Ascending aorta (tissue), 2 donors: ENCODE measurements at regions of chr16 and their contacts with region 1.

Region 1: DNA sequence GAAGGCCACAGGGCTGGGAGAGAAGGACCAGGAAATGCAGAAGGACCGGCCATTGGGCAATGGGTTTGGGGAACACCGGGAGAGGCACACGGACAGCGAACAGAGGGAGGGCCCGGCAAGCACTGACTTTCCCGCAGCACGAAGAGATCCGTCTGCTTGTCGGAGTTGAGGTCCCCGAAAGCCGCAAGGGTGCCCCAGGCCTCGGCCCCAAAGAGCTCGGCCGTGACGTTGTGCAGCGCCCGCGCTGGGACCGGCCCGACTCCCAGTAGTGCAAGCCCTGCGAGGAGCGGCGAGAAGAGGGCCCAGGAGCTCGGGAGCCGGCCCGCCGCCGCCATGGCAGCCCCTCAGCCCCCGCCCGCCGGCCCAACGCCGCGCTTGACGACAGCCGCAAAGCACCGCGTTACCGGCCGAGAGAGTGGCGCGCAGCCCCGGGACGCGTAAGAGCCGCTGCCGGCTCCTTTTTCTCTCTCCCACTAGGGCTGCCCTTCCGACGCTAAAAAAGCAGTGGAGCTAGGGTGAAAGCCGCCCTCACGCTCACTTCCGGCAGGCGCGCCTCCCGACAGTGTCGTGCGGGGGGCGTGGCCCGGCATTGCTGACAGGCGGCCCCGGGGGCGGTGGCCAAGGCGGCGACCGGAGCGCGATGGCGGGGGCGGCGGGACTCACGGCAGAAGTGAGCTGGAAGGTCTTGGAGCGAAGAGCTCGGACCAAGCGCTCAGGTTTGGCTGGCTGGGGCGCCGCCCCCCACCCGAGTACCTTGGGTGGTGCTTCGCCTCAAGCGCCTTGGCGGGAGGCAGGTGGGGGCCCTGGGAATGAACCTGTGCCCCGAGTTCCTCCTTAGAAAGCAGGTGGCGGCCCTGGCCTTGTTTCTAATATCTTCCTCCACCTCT is at the starts of genes ITFG1 and PHKB:
- DNase-seq: peak; percentile 69 to 95
- H3K4me3 ChIP-seq: peak within 1 kb of the TSS; percentile 91 to 95
- H3K27ac ChIP-seq: peak within 1 kb of the TSS; percentile 99 to 100
- H3K4me1 ChIP-seq: peaks cover 8 to 17% of the 10 kb centered on the region in 2 donors
- H3K27me3 ChIP-seq: no peaks in the 10 kb centered on the region
- CTCF ChIP-seq: peak in 1 of 3 experiments; percentile 16
- total RNA-seq, gene ITFG1: 56.7 TPM
- total RNA-seq, gene PHKB: 14.6 TPM

Region 2: GRCh38 chr16:46973207-46973995 is 487.6 kb before region 1 on chr16 and contains the start of gene DNAJA2:
- intact Hi-C with region 1: loop called (anchors 2 kb)
- DNase-seq: peak; percentile 47 to 94
- H3K4me3 ChIP-seq: peak within 1 kb of the TSS; percentile 87
- H3K27ac ChIP-seq: peak within 1 kb of the TSS; percentile 93 to 96
- H3K4me1 ChIP-seq: peaks cover 10 to 15% of the 10 kb centered on the region in 2 donors
- H3K27me3 ChIP-seq: no peaks in the 10 kb centered on the region
- CTCF ChIP-seq: no peak
- total RNA-seq, gene DNAJA2: 15.8 TPM

Region 3: GRCh38 chr16:47045023-47045422 is 415.9 kb before region 1 on chr16:
- intact Hi-C with region 1: loop called (anchors 10 kb)
- DNase-seq: no peak
- H3K4me3 ChIP-seq: no peak overlapping the region
- H3K27ac ChIP-seq: no peak overlapping the region
- H3K4me1 ChIP-seq: no peaks in the 10 kb centered on the region
- H3K27me3 ChIP-seq: no peaks in the 10 kb centered on the region
- CTCF ChIP-seq: peak in 2 of 3 experiments; percentile 5 to 6

Region 4: DNA sequence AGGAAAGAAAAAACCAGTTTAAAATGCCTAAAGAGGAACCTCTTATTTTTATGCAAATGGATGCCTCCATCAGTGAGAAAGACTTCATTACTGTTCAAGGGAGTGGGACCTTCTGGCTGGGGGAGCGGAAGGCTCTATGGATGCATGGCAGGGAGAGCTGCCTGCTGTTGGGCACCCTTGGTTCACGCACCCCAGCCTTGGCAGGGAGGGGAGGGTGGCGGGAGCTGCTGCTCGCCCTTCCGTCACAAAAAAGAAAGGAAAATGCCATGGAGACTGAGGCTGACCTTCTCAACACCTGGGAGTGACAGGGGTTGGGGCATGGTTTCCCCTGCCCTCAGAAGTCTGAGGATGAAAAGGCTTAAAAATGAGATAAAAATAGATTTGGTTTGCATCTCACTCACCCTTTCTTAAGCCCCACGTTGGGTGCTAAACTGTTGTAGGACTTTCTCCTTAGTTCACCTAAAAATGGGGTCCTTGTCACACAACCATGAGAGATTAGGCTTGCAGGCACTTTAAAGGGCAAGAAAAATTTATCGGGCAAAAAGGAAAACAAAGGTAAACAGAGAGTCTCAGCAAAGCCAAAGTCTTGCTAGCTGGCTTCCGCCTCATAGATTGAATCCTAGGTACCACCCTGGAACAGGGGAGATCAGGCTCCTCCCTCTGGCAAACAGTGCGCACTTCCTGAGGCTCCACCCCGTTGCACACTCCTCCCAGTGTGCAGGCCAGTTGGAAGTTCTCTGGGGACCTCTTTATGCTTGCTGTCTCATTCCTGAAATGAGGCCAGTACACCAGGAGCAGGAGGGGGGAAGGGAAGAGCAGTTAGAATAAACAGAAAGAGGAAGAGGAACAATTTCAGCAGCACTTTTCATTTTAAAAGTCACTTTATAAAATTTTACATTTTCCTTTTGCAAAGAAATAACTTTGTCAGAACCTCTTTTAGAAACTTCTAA is 31.7 kb after region 1 on chr16:
- intact Hi-C with region 1: loop called (anchors 2 kb)
- DNase-seq: peak; percentile 31 to 86
- H3K4me3 ChIP-seq: peak overlapping the region in 1 of 2 donors; percentile 21
- H3K27ac ChIP-seq: peak overlapping the region; percentile 65 to 80
- H3K4me1 ChIP-seq: peaks cover 6 to 11% of the 10 kb centered on the region in 2 donors
- H3K27me3 ChIP-seq: no peaks in the 10 kb centered on the region
- CTCF ChIP-seq: no peak